ENCODE measurements at regions of chr10 and their contacts with region 1.

Region 1: DNA sequence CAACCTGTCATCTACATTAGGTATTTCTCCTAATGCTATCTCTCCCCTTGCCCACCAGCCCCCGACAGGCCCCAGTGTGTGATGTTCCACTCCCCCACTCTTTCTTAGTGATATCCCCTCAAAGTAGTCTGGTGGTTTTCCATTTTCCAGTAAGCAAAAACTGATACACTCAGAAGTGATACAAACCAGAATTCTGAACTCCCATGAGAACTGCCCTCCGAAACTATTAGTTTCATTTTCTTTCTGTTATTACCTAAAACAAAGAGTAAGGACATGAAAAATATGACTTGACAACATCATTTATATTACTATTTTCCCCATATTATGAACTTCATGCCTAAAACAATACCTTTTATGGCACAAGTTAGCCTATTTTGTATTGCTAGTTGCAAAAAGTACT is 175.0 kb downstream of the OTUD1 start:
- DNase-seq: no peak
- ATAC-seq: no peak
- H3K4me3 ChIP-seq: no peak overlapping the region
- H3K27ac ChIP-seq: no peak overlapping the region
- H3K4me1 ChIP-seq: no peaks in the 10 kb centered on the region
- H3K27me3 ChIP-seq: no peaks in the 10 kb centered on the region
- CTCF ChIP-seq: no peak

Region 2: GRCh38 chr10:23438550-23439441 is 175.1 kb before region 1 on chr10 and contains the start of gene OTUD1:
- CTCF ChIA-PET with region 1: no interaction called
- POLR2A ChIA-PET with region 1: no interaction called
- in situ Hi-C with region 1: no loop called
- intact Hi-C with region 1: no loop called
- DNase-seq: peak; percentile 24
- ATAC-seq: peak; percentile 93
- H3K4me3 ChIP-seq: peak within 1 kb of the TSS; percentile 58 to 64
- H3K27ac ChIP-seq: peak within 1 kb of the TSS; percentile 73
- H3K4me1 ChIP-seq: peaks cover 9% of the 10 kb centered on the region; the same call in 1 of the 2 replicates
- H3K27me3 ChIP-seq: no peaks in the 10 kb centered on the region
- CTCF ChIP-seq: no peak
- total RNA-seq, gene OTUD1: 2.8 TPM

Region 3: GRCh38 chr10:23556727-23557440 is 57.0 kb before region 1 on chr10:
- CTCF ChIA-PET with region 1: no interaction called
- POLR2A ChIA-PET with region 1: no interaction called
- in situ Hi-C with region 1: no loop called
- intact Hi-C with region 1: loop called (anchors 10 kb)
- DNase-seq: no peak
- ATAC-seq: no peak
- H3K4me3 ChIP-seq: no peak overlapping the region
- H3K27ac ChIP-seq: no peak overlapping the region
- H3K4me1 ChIP-seq: no peaks in the 10 kb centered on the region
- H3K27me3 ChIP-seq: no peaks in the 10 kb centered on the region
- CTCF ChIP-seq: no peak